Ascending aorta (tissue), 2 donors: ENCODE measurements at regions of chr11 and their contacts with region 1.

Region 1: GRCh38 chr11:63945477-63946163 is 6.8 kb downstream of the NAA40 start:
- DNase-seq: peak in 1 of 2 donors; percentile 86
- H3K4me3 ChIP-seq: peak overlapping the region; percentile 27 to 33
- H3K27ac ChIP-seq: peak overlapping the region; percentile 64 to 75
- H3K4me1 ChIP-seq: peaks cover 3 to 9% of the 10 kb centered on the region in 2 donors
- H3K27me3 ChIP-seq: no peaks in the 10 kb centered on the region
- CTCF ChIP-seq: peak; percentile 75 to 84 (median 81)

Region 2: DNA sequence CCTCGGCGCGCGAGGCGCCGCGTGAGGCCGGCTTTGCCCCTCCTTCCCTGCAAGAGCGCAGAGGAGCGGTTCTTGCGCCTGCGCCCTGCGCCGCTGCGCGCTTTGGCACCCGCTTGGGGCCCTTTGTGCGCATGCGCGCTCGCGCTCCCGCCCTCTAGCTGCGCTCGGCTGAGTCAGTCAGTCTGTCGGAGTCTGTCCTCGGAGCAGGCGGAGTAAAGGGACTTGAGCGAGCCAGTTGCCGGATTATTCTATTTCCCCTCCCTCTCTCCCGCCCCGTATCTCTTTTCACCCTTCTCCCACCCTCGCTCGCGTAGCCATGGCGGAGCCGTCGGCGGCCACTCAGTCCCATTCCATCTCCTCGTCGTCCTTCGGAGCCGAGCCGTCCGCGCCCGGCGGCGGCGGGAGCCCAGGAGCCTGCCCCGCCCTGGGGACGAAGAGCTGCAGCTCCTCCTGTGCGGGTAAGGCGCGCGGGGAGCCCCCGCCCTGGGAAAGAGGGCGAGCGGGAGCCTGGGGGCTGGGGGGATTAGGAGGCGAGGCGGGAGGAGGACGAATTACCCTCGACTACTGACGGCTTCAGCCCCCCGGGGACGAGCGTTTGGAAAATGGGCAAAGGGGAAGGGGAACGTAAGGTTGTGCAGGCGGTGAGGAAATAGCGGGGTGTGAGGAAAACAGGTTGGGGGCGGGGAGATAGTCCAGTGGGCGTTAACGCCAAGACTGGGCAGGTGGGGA is 264.1 kb before region 1 on chr11 and contains the start of gene RTN3:
- intact Hi-C with region 1: loop called (anchors 10 kb)
- DNase-seq: peak; percentile 84 to 98
- H3K4me3 ChIP-seq: peak within 1 kb of the TSS; percentile 76 to 88
- H3K27ac ChIP-seq: peak within 1 kb of the TSS; percentile 91 to 96
- H3K4me1 ChIP-seq: peaks cover 0 to 3% of the 10 kb centered on the region in 2 donors
- H3K27me3 ChIP-seq: no peaks in the 10 kb centered on the region
- CTCF ChIP-seq: no peak
- total RNA-seq, gene RTN3: 49.5 TPM

Region 3: DNA sequence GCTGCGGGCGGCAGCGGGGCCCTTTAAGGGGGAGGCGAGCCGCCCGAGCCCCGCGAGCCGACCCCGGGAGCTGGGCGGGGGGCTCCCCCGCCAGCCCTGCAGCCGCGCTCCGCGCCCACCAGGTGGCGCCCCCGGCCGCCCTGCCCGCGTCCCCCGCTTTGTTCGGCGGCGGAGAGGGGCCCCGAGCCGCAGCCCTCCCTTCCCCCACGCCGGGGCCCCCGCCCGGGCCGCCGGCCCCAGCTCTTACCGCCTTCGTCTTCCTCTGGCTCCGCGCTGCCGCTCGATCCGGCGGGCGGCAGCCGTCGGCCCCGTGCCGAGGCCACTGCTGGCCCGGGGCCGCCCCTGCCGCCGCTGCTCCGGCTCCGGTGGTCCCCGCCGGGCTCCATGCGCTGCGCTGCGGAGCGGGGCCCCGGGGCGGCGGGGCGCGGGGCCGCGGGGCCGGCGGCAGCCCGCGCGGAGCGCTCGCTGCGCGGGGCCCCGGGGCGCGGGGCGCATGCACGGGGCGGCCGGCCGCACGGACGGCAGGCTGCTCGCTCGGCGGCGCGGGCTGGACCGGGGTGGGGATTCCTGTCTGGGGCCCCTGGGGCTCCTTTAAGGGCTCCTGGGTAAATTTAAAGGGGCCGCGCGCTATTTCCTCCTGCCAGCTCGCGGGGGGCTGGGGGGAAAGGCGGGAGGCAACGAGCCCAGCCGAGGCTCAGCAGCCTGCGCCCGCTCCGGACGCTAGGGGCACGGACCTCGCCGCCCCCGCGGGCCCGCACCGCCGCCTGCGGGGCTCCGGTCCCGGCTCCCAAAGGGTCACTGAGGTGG is 177.2 kb before region 1 on chr11 and contains the start of gene ZFTA:
- intact Hi-C with region 1: loop called (anchors 2 kb)
- DNase-seq: peak in 1 of 2 donors; percentile 80
- H3K4me3 ChIP-seq: peak within 1 kb of the TSS; percentile 96 to 98
- H3K27ac ChIP-seq: peak within 1 kb of the TSS; percentile 73 to 89
- H3K4me1 ChIP-seq: peaks cover 6 to 7% of the 10 kb centered on the region in 2 donors
- H3K27me3 ChIP-seq: no peaks in the 10 kb centered on the region
- CTCF ChIP-seq: peak in 2 of 3 experiments; percentile 8 to 94
- total RNA-seq, gene ZFTA: 34.7 TPM

Region 4: GRCh38 chr11:63871962-63872799 is 73.4 kb before region 1 on chr11:
- intact Hi-C with region 1: loop called (anchors 1 kb)
- DNase-seq: peak; percentile 72 to 95
- H3K4me3 ChIP-seq: peak overlapping the region in 1 of 2 donors; percentile 1
- H3K27ac ChIP-seq: peak overlapping the region; percentile 38 to 48
- H3K4me1 ChIP-seq: peaks cover 20 to 54% of the 10 kb centered on the region in 2 donors
- H3K27me3 ChIP-seq: no peaks in the 10 kb centered on the region
- CTCF ChIP-seq: peak; percentile 44 to 61 (median 50)

Region 5: GRCh38 chr11:63916837-63917691 is 28.6 kb before region 1 on chr11 and contains the start of gene RCOR2:
- intact Hi-C with region 1: loop called (anchors 1 kb)
- DNase-seq: peak in 1 of 2 donors; percentile 85
- H3K4me3 ChIP-seq: peak within 1 kb of the TSS; percentile 63 to 67
- H3K27ac ChIP-seq: peak within 1 kb of the TSS; percentile 90 to 92
- H3K4me1 ChIP-seq: peaks cover 23 to 41% of the 10 kb centered on the region in 2 donors
- H3K27me3 ChIP-seq: no peaks in the 10 kb centered on the region
- CTCF ChIP-seq: no peak
- total RNA-seq, gene RCOR2: not detected

Region 6: GRCh38 chr11:64036087-64037026 is 90.7 kb after region 1 on chr11:
- intact Hi-C with region 1: no loop called
- DNase-seq: no peak
- H3K4me3 ChIP-seq: peak overlapping the region; percentile 49 to 79
- H3K27ac ChIP-seq: no peak overlapping the region
- H3K4me1 ChIP-seq: peaks cover 11 to 12% of the 10 kb centered on the region in 2 donors
- H3K27me3 ChIP-seq: peaks cover 5% of the 10 kb centered on the region
- CTCF ChIP-seq: peak in 1 of 3 experiments; percentile 10